ENCODE measurements at regions of chr18 and their contacts with region 1.

Region 1: GRCh38 chr18:52339891-52340371 is at the start of gene DCC:
- DNase-seq: peak; percentile 68
- H3K4me3 ChIP-seq: peak within 1 kb of the TSS; percentile 40 to 64
- H3K27ac ChIP-seq: no peak within 1 kb of the TSS
- H3K4me1 ChIP-seq: peaks cover 0 to 20% of the 10 kb centered on the region in 2 experiments; a peak in 1 of 4 replicates
- H3K27me3 ChIP-seq: peaks cover 19% of the 10 kb centered on the region; the same call in 1 of the 2 replicates
- CTCF ChIP-seq: peak; percentile 52
- EP300 ChIP-seq: no peak
- RAD21 ChIP-seq: peak; percentile 73
- polyA plus RNA-seq, gene DCC: 0.20 and 0.34 TPM in 2 replicates

Region 2: GRCh38 chr18:51668101-51668500 is 671.8 kb before region 1 on chr18:
- CTCF ChIA-PET with region 1: interaction called, 17 read pairs
- POLR2A ChIA-PET with region 1: no interaction called
- DNase-seq: peak; percentile 65
- H3K4me3 ChIP-seq: peak overlapping the region in 1 of 2 experiments; percentile 19; a peak in 1 of 4 replicates
- H3K27ac ChIP-seq: no peak overlapping the region
- H3K4me1 ChIP-seq: peaks cover 0 to 17% of the 10 kb centered on the region in 2 experiments; a peak in 2 of 4 replicates
- H3K27me3 ChIP-seq: no peaks in the 10 kb centered on the region
- CTCF ChIP-seq: peak; percentile 86
- EP300 ChIP-seq: no peak
- RAD21 ChIP-seq: peak; percentile 90

Region 3: DNA sequence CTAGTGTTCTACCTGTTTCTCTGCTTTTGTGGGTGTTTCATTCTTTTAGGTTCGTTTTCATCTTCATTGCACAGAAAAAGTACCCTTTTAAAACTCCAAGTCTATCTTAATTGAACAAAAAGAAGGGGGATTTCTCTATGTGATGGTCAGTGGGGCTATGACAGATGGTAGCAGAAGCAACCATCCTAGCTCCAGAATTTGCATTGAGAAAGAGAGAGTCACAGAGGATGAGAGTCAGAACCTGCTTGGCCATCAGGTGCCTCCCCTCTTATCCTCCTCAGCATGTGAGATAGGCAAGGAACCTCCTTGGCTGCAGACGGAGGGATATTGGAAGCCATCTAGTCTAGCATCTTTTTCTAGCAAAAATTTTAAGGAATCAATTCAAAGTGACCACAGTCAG is 397.9 kb before region 1 on chr18:
- CTCF ChIA-PET with region 1: no interaction called
- POLR2A ChIA-PET with region 1: no interaction called
- DNase-seq: no peak
- H3K4me3 ChIP-seq: no peak overlapping the region
- H3K27ac ChIP-seq: no peak overlapping the region
- H3K4me1 ChIP-seq: no peaks in the 10 kb centered on the region
- H3K27me3 ChIP-seq: no peaks in the 10 kb centered on the region
- CTCF ChIP-seq: no peak
- EP300 ChIP-seq: no peak
- RAD21 ChIP-seq: no peak

Region 4: DNA sequence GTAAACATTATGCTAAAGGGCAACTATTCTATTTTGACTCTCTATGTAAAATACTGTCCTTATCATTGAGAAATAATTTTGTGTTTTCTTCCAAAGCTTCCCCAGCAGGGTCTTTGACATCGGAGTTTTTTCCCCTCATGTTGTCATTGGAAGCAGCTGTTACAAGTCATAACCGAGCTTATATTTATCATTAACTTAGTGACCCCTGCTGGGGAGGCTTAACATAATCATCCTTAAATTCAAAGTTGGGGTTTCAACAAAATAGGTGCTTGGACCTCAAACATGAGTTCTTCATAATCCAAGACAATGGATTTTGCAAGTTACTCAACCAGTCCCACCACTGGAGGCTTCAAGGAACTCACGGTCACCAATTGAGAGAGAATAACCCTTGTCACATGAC is 331.0 kb after region 1 on chr18:
- CTCF ChIA-PET with region 1: interaction called, 10 read pairs
- POLR2A ChIA-PET with region 1: interaction called, 3 read pairs
- DNase-seq: peak; percentile 37
- H3K4me3 ChIP-seq: no peak overlapping the region
- H3K27ac ChIP-seq: no peak overlapping the region
- H3K4me1 ChIP-seq: peaks cover 0 to 6% of the 10 kb centered on the region in 2 experiments; a peak in 1 of 4 replicates
- H3K27me3 ChIP-seq: no peaks in the 10 kb centered on the region
- CTCF ChIP-seq: peak; percentile 55
- EP300 ChIP-seq: no peak
- RAD21 ChIP-seq: peak; percentile 72

Region 5: DNA sequence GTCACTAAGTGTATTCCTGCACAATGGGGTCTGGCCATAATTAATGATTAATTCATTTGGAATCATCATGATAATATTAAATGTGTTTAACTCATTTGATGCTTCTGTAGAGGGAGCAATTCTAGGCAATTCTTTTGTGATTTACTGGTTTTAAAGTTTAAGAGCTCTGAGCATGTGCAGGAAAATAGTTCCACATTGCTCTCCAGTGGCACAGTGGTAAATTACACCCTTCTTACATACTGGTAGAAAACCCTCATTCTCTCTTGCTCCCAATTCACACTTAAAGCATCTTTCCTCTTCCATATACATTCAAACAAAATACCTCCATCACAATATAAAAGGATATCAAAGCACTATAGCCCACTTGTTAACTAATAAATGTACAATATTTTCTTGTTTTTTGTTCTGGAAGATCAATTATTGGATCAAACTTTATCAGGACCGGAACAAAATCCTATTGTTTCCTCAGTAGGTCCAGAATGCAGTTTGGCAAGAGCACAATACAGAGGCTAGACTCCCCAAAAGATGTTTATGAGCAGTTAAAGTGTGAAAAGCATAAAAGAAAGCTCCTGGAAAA is 1040.2 kb after region 1 on chr18:
- CTCF ChIA-PET with region 1: interaction called, 11 read pairs
- POLR2A ChIA-PET with region 1: no interaction called
- DNase-seq: peak; percentile 31
- H3K4me3 ChIP-seq: no peak overlapping the region
- H3K27ac ChIP-seq: no peak overlapping the region
- H3K4me1 ChIP-seq: peaks cover 0 to 9% of the 10 kb centered on the region in 2 experiments; a peak in 2 of 4 replicates
- H3K27me3 ChIP-seq: no peaks in the 10 kb centered on the region
- CTCF ChIP-seq: peak; percentile 25; the same call in 1 of the 2 replicates
- EP300 ChIP-seq: peak in 1 of 2 experiments; percentile 34; a peak in 1 of 4 replicates
- RAD21 ChIP-seq: peak; percentile 87

Measured in SK-N-SH (cell line).